Prostate gland (tissue), 2 donors: ENCODE measurements at regions of chr19 and their contacts with region 1.

Region 1: DNA sequence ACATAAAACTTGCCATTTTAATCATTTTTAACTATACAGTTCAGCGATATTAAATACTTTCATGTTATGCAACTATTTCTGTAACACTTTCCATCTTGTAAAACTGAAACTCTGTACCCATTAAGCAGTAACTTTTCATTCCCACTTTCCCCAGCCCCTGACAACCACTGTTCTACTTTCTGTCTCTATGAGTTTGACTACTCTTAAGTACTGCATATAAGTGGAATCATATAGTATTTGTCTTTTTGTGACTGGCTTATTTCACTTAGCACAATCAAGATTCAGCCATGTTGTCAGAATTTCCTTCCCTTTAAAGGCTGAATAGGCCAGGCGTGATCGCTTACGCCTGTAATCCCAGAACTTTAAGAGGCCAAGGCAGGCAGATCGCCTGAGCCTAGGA is 56.2 kb downstream of the ARHGAP35 start:
- DNase-seq: no peak
- H3K4me3 ChIP-seq: no peak overlapping the region
- H3K27ac ChIP-seq: no peak overlapping the region
- H3K4me1 ChIP-seq: peaks cover 3% of the 10 kb centered on the region
- H3K27me3 ChIP-seq: no peaks in the 10 kb centered on the region
- CTCF ChIP-seq: no peak
- POLR2A ChIP-seq: no peak

Region 2: DNA sequence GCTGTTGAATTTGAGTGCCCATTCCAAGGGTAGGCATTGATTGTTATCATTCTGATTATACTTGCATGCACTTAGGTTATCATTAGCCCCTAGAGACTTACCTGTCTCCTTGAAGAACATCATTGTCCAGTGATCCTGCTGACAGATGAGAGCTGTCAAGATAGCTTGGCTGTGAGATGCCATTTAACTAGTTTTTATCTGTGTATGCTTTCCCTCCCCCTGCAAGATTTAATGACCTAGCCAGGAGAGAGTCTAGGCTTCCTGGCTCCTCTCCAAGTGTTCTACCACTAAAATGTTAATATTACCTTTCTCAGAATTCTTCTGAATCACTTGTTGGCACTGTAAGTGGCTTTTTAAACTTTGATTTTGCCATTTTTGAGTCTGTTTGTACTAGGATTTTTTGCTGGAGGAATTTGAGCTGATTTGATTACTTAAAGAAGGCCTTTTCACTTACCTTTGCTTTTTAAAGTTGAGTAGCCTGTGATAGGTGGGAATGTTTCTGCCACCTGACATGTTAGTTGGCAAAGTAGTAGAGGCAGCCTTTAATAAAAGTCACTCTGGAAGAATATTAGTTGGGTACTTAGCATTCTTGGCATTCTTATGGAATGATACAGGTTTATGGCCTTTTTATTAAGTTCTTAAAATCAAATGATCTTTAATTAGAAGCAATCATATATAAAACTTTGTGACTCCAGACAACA is 15.2 kb before region 1 on chr19:
- intact Hi-C with region 1: loop called (anchors 2 kb)
- DNase-seq: no peak
- H3K4me3 ChIP-seq: no peak overlapping the region
- H3K27ac ChIP-seq: peak overlapping the region in 1 of 2 donors; percentile 3
- H3K4me1 ChIP-seq: peaks cover 29% of the 10 kb centered on the region
- H3K27me3 ChIP-seq: no peaks in the 10 kb centered on the region
- CTCF ChIP-seq: no peak
- POLR2A ChIP-seq: no peak

Region 3: GRCh38 chr19:46967578-46968027 is 50.6 kb after region 1 on chr19:
- intact Hi-C with region 1: no loop called
- DNase-seq: peak; percentile 75
- H3K4me3 ChIP-seq: no peak overlapping the region
- H3K27ac ChIP-seq: peak overlapping the region; percentile 0 to 28
- H3K4me1 ChIP-seq: no peaks in the 10 kb centered on the region
- H3K27me3 ChIP-seq: no peaks in the 10 kb centered on the region
- CTCF ChIP-seq: no peak
- POLR2A ChIP-seq: no peak